Naive thymus-derived CD4-positive, alpha-beta T cell (primary cell): ENCODE measurements at regions of chr17 and their contacts with region 1.

Region 1: DNA sequence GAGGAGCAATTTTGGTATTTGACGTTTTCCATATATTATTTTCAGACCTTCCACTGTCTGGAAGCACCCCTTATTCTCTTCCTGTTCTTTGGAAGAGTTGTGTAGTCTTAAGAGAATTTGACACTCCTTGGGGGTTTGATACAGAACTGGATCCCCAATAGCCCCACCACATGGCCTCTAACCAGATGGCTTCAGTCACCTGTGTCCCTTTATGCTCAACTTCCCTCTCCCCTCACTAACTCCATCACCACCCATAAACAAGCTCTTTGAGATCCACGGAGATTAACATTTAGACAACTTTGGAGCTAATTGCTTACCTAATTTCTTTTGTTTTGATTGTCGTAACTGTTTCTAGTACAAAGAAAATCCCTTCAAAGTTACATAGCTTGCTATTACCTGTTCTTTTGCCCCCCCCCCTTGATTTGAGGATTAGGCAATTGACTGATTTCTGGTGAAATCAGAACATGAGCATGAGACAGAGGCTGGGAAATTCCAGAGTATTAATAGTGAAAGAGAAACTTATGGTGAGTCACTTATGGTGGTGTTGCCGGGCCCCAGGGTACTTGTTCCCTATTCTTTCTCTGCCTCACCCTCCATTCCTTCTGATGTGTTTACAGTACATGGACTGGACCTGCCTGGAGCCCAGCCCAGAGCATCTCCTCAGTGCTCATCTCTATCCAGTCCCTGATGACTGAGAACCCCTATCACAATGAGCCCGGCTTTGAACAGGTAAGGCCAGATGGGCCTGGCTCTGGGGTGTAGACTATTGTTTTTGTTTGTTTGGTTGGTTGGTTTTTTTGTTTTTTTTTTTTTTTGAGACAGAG is 7.5 kb downstream of the UBE2Z start:
- DNase-seq: peak in 2 of 9 donors; percentile 30 to 63
- ATAC-seq: peak; percentile 93
- H3K4me3 ChIP-seq: no peak overlapping the region
- H3K4me3 Mint-ChIP-seq: peak overlapping the region in 1 of 10 donors; percentile 87
- H3K27ac ChIP-seq: peak overlapping the region; percentile 23
- H3K27ac Mint-ChIP-seq: peak overlapping the region in 8 of 9 donors; percentile 10 to 99 (median 64)
- H3K4me1 ChIP-seq: peaks cover 9 to 18% of the 10 kb centered on the region in 2 donors
- H3K4me1 Mint-ChIP-seq: peaks cover 25 to 58% (median 46%) of the 10 kb centered on the region in 7 donors
- H3K27me3 ChIP-seq: no peaks in the 10 kb centered on the region
- H3K27me3 Mint-ChIP-seq: no peaks in the 10 kb centered on the region

Region 2: DNA sequence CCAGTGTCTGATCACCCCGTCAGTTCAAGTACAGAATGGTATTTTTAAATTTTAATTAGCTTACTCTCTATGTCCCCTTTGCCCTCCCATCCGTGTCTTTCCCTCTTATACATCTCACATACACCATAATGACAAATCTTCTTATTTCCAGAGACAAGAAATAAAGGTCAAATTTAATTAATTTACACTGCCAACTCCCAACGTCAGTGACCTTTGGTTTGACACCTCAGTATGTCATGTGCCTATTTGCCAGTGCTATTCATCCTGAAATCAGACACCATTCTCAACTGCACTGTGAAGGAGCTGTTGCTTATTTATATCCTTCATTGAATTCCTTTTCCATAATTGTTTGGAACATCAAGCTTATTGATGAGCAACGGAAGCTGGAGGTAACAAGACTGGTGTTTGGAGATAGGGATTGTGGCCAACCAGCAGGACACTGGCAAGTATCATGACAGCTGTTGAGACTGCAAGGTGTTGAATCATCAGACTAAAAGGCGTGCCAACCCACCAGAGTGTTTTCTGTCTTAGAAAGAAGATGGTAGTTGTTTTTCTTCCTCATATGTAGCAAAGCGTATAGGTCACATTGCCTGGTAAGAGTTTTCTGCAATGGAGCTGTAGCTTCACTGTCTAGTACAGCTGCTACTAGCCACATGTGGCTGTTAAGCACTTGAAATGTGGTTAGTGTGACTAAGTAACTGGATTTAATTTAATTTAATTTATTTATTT is 72.3 kb before region 1 on chr17:
- CTCF ChIA-PET with region 1: no interaction called
- POLR2A ChIA-PET with region 1: no interaction called
- intact Hi-C with region 1: no loop called
- DNase-seq: no peak
- ATAC-seq: no peak
- H3K4me3 ChIP-seq: no peak overlapping the region
- H3K4me3 Mint-ChIP-seq: peak overlapping the region in 4 of 10 donors; percentile 29 to 48 (median 36)
- H3K27ac ChIP-seq: no peak overlapping the region
- H3K27ac Mint-ChIP-seq: peak overlapping the region in 5 of 9 donors; percentile 59 to 98 (median 93)
- H3K4me1 ChIP-seq: peaks cover 20 to 27% of the 10 kb centered on the region in 2 donors
- H3K4me1 Mint-ChIP-seq: peaks cover 18 to 48% (median 42%) of the 10 kb centered on the region in 7 donors
- H3K27me3 ChIP-seq: no peaks in the 10 kb centered on the region
- H3K27me3 Mint-ChIP-seq: no peaks in the 10 kb centered on the region

Region 3: GRCh38 chr17:48901241-48901640 is 14.4 kb before region 1 on chr17:
- CTCF ChIA-PET with region 1: no interaction called
- POLR2A ChIA-PET with region 1: no interaction called
- intact Hi-C with region 1: no loop called
- DNase-seq: no peak
- ATAC-seq: no peak
- H3K4me3 ChIP-seq: no peak overlapping the region
- H3K4me3 Mint-ChIP-seq: no peak overlapping the region
- H3K27ac ChIP-seq: no peak overlapping the region
- H3K27ac Mint-ChIP-seq: peak overlapping the region in 1 of 9 donors; percentile 38
- H3K4me1 ChIP-seq: no peaks in the 10 kb centered on the region
- H3K4me1 Mint-ChIP-seq: peaks cover 0 to 7% (median 0%) of the 10 kb centered on the region in 7 donors
- H3K27me3 ChIP-seq: no peaks in the 10 kb centered on the region
- H3K27me3 Mint-ChIP-seq: no peaks in the 10 kb centered on the region

Region 4: GRCh38 chr17:48944519-48945260 is 29.0 kb after region 1 on chr17 and contains the start of gene SNF8:
- CTCF ChIA-PET with region 1: no interaction called
- POLR2A ChIA-PET with region 1: interaction called, 29 read pairs
- intact Hi-C with region 1: loop called in 1 of 2 experiments (anchors 2 kb)
- DNase-seq: peak; percentile 84 to 96 (median 91)
- ATAC-seq: peak; percentile 97
- H3K4me3 ChIP-seq: peak within 1 kb of the TSS; percentile 100
- H3K4me3 Mint-ChIP-seq: peak within 1 kb of the TSS; percentile 92 to 100 (median 98)
- H3K27ac ChIP-seq: peak within 1 kb of the TSS; percentile 92
- H3K27ac Mint-ChIP-seq: peak within 1 kb of the TSS; percentile 89 to 99 (median 97)
- H3K4me1 ChIP-seq: peaks cover 11 to 14% of the 10 kb centered on the region in 2 donors
- H3K4me1 Mint-ChIP-seq: peaks cover 4 to 32% (median 12%) of the 10 kb centered on the region in 7 donors
- H3K27me3 ChIP-seq: no peaks in the 10 kb centered on the region
- H3K27me3 Mint-ChIP-seq: peaks cover 0 to 9% (median 0%) of the 10 kb centered on the region in 5 donors
- total RNA-seq, gene SNF8: 54.8 to 122 (median 60.3) TPM

Region 5: GRCh38 chr17:50765454-50766221 is 1850.0 kb after region 1 on chr17:
- CTCF ChIA-PET with region 1: no interaction called
- POLR2A ChIA-PET with region 1: no interaction called
- intact Hi-C with region 1: no loop called
- DNase-seq: no peak
- ATAC-seq: peak; percentile 59
- H3K4me3 ChIP-seq: no peak overlapping the region
- H3K4me3 Mint-ChIP-seq: no peak overlapping the region
- H3K27ac ChIP-seq: no peak overlapping the region
- H3K27ac Mint-ChIP-seq: peak overlapping the region in 1 of 9 donors; percentile 30
- H3K4me1 ChIP-seq: peaks cover 0 to 10% of the 10 kb centered on the region in 2 donors
- H3K4me1 Mint-ChIP-seq: peaks cover 2 to 24% (median 16%) of the 10 kb centered on the region in 7 donors
- H3K27me3 ChIP-seq: no peaks in the 10 kb centered on the region
- H3K27me3 Mint-ChIP-seq: peaks cover 0 to 32% (median 0%) of the 10 kb centered on the region in 5 donors